K562 (cell line): ENCODE measurements at regions of chr7 and their contacts with region 1.

Region 1: DNA sequence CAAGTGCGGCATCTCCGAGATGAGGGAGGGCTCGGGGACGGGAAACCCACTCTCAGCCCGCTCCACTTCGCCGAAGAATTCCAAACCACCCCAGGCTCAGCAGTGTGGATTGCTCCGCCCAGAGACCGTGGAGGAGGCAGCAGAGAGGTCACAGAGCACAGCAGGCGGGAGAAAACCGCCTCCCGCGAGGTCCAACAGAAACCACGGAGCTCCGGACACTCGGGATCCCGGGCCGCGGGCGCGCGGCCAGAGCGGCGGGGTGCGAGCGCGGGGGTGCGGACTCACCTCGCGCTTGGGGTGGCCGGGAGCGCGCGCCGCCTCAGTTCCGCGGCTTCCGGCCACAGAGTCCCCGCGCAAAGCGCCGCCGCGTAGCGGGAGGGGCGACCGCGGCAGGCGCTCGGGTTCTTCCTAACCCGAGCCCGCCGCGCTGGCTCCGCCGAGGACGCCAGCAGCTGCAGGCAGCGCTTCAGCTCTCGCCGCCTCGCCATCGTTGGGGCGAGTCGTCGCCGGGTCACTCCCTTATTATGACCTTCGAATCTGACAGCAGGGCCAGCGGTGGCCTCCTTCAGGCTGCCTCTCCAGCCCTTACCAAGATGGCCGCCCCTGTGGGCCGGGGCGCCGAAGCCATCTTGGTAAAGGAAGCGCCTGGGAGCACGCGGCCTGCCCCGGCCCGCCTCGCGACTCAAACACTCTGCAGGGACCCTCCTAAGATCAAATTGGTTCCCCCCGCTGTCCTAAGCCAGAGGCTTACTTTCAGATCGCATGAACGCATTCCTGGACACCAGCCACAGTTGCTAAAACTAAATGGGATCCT is at the start of gene NAPEPLD:
- DNase-seq: peak; percentile 94 to 96 (median 94)
- ATAC-seq: peak; percentile 83
- H3K4me3 ChIP-seq: peak within 1 kb of the TSS; percentile 69
- H3K27ac ChIP-seq: peak within 1 kb of the TSS; percentile 93
- H3K4me1 ChIP-seq: peaks cover 25 to 46% of the 10 kb centered on the region in 2 experiments
- H3K27me3 ChIP-seq: no peaks in the 10 kb centered on the region
- CTCF ChIP-seq: peak in 2 of 3 experiments; percentile 8 to 15; a peak in 1 of 6 replicates
- EP300 ChIP-seq: peak; percentile 24; the same call in 1 of the 2 replicates
- POLR2A ChIP-seq: peak; percentile 86
- RAD21 ChIP-seq: no peak; a peak in 1 of 4 replicates
- polyA plus RNA-seq, gene NAPEPLD: 5.7 to 7.7 TPM

Region 2: DNA sequence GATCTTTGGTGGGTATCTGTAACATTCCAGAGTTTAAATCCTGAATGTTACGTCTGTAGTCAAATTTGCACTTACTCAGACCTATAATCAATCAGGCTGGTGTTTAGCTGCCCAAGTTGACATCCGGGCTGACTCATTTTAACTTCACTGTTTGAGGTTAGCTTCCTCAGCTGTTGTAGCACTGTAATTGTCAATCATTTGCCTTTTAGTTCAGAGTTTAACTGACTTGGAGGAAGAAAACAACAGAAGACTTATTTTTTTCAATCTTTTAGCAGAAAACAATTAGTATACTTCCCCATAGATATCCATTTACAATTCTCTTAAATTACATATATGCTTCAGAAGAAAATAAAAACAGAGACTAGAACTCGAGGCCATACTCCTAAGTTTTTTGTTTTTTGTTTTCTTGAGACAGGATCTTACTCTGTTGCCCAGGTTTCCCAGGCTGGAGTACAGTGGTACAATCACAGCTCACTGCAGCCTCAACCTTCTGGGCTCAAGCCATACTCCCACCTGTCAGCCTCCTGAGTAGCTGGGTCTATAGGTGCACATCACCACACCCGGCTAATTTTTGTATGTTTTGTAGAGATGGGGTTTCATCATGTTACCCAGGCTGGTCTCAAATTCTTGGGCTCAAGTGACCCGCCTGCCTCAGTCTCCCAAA is 274.9 kb before region 1 on chr7:
- CTCF ChIA-PET with region 1: no interaction called
- POLR2A ChIA-PET with region 1: no interaction called
- in situ Hi-C with region 1: no loop called
- intact Hi-C with region 1: no loop called
- DNase-seq: no peak
- ATAC-seq: no peak
- H3K4me3 ChIP-seq: no peak overlapping the region
- H3K27ac ChIP-seq: no peak overlapping the region
- H3K4me1 ChIP-seq: peaks cover 0 to 6% of the 10 kb centered on the region in 2 experiments; a peak in 1 of 5 replicates
- H3K27me3 ChIP-seq: no peaks in the 10 kb centered on the region
- CTCF ChIP-seq: no peak
- EP300 ChIP-seq: no peak
- POLR2A ChIP-seq: no peak
- RAD21 ChIP-seq: no peak

Region 3: GRCh38 chr7:103074519-103075336 is 74.5 kb before region 1 on chr7 and contains the starts of genes ARMC10 and FBXL13:
- CTCF ChIA-PET with region 1: no interaction called
- POLR2A ChIA-PET with region 1: interaction called, 5 read pairs
- in situ Hi-C with region 1: no loop called
- intact Hi-C with region 1: loop called (anchors 1 kb)
- DNase-seq: peak; percentile 96 to 98 (median 96)
- ATAC-seq: peak; percentile 95
- H3K4me3 ChIP-seq: peak within 1 kb of the TSS; percentile 83
- H3K27ac ChIP-seq: peak within 1 kb of the TSS; percentile 82
- H3K4me1 ChIP-seq: peaks cover 6 to 8% of the 10 kb centered on the region in 2 experiments; a peak in 4 of 5 replicates
- H3K27me3 ChIP-seq: no peaks in the 10 kb centered on the region
- CTCF ChIP-seq: peak; percentile 54 to 87 (median 55); a peak in 5 of 6 replicates
- EP300 ChIP-seq: no peak; the same call in 1 of the 2 replicates
- POLR2A ChIP-seq: peak; percentile 78
- RAD21 ChIP-seq: no peak
- polyA plus RNA-seq, gene ARMC10: 17.0 to 22.7 TPM
- polyA plus RNA-seq, gene FBXL13: 25.4 to 26.6 TPM

Region 4: GRCh38 chr7:103094102-103094501 is 55.1 kb before region 1 on chr7:
- CTCF ChIA-PET with region 1: no interaction called
- POLR2A ChIA-PET with region 1: interaction called, 4 read pairs
- in situ Hi-C with region 1: no loop called
- intact Hi-C with region 1: loop called (anchors 1 kb)
- DNase-seq: no peak
- ATAC-seq: peak; percentile 58
- H3K4me3 ChIP-seq: no peak overlapping the region
- H3K27ac ChIP-seq: no peak overlapping the region
- H3K4me1 ChIP-seq: no peaks in the 10 kb centered on the region
- H3K27me3 ChIP-seq: no peaks in the 10 kb centered on the region
- CTCF ChIP-seq: peak in 1 of 3 experiments; percentile 52; a peak in 2 of 6 replicates
- EP300 ChIP-seq: no peak
- POLR2A ChIP-seq: no peak
- RAD21 ChIP-seq: peak in 1 of 2 experiments; percentile 69; a peak in 2 of 4 replicates

Region 5: DNA sequence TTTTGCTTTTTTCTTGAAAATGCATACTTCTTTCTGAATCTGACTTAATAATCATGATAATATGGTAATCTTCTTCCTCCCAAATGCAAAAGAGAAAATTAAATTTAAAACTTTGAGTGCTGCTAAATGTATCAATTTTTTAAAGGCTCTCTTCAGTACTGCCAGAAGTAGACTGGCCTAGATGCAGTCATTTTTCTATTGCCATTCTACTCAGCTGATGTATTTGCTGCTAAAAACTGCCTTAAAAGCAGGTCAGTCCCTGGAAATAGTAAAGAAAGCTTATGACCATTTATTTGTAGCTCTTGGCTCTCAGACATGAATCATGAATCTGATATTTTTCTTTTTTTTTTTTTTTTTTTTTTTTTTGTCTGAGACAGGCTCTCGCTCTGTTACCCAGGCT is 28.8 kb before region 1 on chr7:
- CTCF ChIA-PET with region 1: no interaction called
- POLR2A ChIA-PET with region 1: interaction called, 17 read pairs
- in situ Hi-C with region 1: no loop called
- intact Hi-C with region 1: loop called (anchors 1 kb)
- DNase-seq: no peak
- ATAC-seq: no peak
- H3K4me3 ChIP-seq: no peak overlapping the region
- H3K27ac ChIP-seq: peak overlapping the region; percentile 72; the same call in 2 of the 3 replicates
- H3K4me1 ChIP-seq: peaks cover 14 to 38% of the 10 kb centered on the region in 2 experiments
- H3K27me3 ChIP-seq: no peaks in the 10 kb centered on the region
- CTCF ChIP-seq: no peak
- EP300 ChIP-seq: no peak
- POLR2A ChIP-seq: no peak
- RAD21 ChIP-seq: no peak; a peak in 1 of 4 replicates

Region 6: DNA sequence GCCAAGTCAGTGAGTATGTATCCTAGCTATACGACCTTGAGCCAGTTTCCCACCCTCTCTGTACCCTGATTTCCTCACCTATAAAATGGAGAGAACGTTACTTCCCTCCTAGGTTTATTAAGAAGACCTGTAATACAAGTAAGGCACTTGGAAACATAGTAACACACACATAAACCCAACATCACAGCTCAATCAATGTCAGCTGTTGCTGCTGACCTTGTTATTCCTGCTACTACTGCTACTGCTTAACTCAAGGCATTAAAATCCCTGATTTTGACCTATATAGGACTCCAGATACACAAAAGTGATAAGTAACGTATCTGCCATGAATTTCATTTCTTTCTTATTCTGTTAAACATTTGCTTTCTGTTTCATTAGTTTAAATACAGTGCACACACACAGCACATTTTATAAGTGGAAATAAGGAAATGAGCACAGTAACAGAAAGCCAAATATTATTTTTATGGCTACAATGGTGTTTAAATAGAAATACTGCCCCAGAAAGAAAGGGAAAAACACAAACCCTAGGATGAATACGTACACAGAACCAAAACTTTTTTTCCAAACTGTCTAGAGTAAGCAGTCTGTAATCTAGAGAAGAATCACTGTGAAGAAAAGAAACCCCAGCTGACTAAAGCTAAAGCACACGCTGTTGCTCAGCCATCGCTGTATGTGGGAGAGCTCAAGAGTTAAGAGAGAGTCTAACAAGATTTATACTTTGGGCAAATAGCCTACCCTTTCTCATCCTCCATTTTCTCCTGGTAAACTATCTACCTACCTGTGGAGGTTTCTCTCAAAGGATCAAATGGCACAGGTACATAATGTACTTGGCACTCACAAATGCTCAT is 19.3 kb before region 1 on chr7:
- CTCF ChIA-PET with region 1: no interaction called
- POLR2A ChIA-PET with region 1: interaction called, 6 read pairs
- in situ Hi-C with region 1: no loop called
- intact Hi-C with region 1: loop called (anchors 2 kb)
- DNase-seq: no peak
- ATAC-seq: peak; percentile 39; the same call in 1 of the 3 replicates
- H3K4me3 ChIP-seq: no peak overlapping the region
- H3K27ac ChIP-seq: no peak overlapping the region
- H3K4me1 ChIP-seq: peaks cover 2 to 8% of the 10 kb centered on the region in 2 experiments; a peak in 3 of 5 replicates
- H3K27me3 ChIP-seq: no peaks in the 10 kb centered on the region
- CTCF ChIP-seq: no peak
- EP300 ChIP-seq: no peak
- POLR2A ChIP-seq: no peak
- RAD21 ChIP-seq: no peak